ENCODE measurements at regions of chr5 and their contacts with region 1.

Region 1: GRCh38 chr5:59905188-59905587 is 11.7 kb upstream of the PDE4D start:
- DNase-seq: no peak
- H3K4me3 Mint-ChIP-seq: no peak overlapping the region
- H3K27ac Mint-ChIP-seq: no peak overlapping the region
- H3K4me1 Mint-ChIP-seq: no peaks in the 10 kb centered on the region
- H3K27me3 Mint-ChIP-seq: peaks cover 71% of the 10 kb centered on the region
- CTCF ChIP-seq: no peak

Region 2: DNA sequence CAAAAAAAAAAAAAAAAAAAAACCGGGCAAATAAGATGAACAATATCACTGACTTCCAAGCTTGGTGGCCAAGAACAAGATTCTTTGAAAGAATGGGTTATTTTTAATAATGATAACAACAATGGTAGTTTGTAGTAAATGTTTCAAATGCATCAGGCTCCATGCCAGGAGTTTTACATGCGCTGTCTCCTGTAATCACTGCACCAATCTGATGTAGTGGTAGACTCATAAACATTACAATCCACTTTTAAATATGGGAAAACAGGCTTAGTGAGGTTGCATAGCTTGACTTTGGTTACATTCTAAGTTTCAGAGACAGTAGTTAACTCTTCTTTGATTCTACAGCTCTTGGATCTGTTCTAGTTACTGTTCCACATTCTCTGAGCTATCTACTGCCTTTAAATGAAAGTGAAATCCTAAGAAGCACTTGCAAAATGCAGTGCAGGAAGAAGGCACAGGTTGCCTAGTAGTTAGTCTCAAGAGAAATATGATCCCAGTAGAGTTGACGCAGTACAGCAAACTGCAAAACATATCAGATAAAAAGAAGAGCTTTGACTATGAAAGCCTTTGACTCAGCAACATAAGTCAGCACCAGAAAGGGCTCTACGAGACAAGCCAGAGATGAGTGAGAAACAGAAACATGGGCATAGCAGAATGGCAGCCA is 73.7 kb before region 1 on chr5:
- CTCF ChIA-PET with region 1: no interaction called
- intact Hi-C with region 1: loop called (anchors 5 kb)
- DNase-seq: no peak
- H3K4me3 Mint-ChIP-seq: no peak overlapping the region
- H3K27ac Mint-ChIP-seq: no peak overlapping the region
- H3K4me1 Mint-ChIP-seq: peaks cover 20% of the 10 kb centered on the region
- H3K27me3 Mint-ChIP-seq: peaks cover 16% of the 10 kb centered on the region
- CTCF ChIP-seq: no peak

Measured in Calu3 (cell line).